CD4-positive, alpha-beta memory T cell (primary cell): ENCODE measurements at regions of chr16 and their contacts with region 1.

Region 1: DNA sequence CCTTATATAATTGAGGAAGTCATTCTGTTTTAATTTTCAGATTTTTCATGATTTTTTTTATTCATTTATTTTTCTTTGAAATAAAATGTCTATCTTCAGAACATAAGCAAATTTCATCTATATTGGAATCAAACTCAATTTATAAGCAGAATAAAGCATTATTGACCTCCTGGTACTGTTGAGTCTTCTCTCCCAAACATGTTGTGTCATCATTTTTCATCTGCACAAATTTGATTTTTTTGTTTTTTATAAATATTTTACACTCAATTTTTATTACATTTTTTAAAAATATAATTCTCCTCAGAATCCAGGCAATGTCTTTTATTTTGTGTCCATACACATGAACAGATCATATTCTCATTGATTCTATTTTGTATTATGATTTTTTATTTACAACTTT is 2363.9 kb downstream of the TP53TG3F start:
- DNase-seq: no peak
- H3K4me3 ChIP-seq: no peak overlapping the region
- H3K4me3 Mint-ChIP-seq: no peak overlapping the region
- H3K27ac ChIP-seq: no peak overlapping the region
- H3K27ac Mint-ChIP-seq: no peak overlapping the region
- H3K4me1 ChIP-seq: no peaks in the 10 kb centered on the region
- H3K4me1 Mint-ChIP-seq: no peaks in the 10 kb centered on the region
- H3K27me3 ChIP-seq: no peaks in the 10 kb centered on the region
- H3K27me3 Mint-ChIP-seq: no peaks in the 10 kb centered on the region

Region 2: GRCh38 chr16:35862242-35862641 is 38.9 kb after region 1 on chr16:
- CTCF ChIA-PET with region 1: no interaction called
- POLR2A ChIA-PET with region 1: no interaction called
- intact Hi-C with region 1: loop called (anchors 10 kb)
- DNase-seq: no peak
- H3K4me3 ChIP-seq: no peak overlapping the region
- H3K4me3 Mint-ChIP-seq: no peak overlapping the region
- H3K27ac ChIP-seq: no peak overlapping the region
- H3K27ac Mint-ChIP-seq: no peak overlapping the region
- H3K4me1 ChIP-seq: no peaks in the 10 kb centered on the region
- H3K4me1 Mint-ChIP-seq: no peaks in the 10 kb centered on the region
- H3K27me3 ChIP-seq: no peaks in the 10 kb centered on the region
- H3K27me3 Mint-ChIP-seq: no peaks in the 10 kb centered on the region